ENCODE measurements at regions of chr1 and their contacts with region 1.

Region 1: DNA sequence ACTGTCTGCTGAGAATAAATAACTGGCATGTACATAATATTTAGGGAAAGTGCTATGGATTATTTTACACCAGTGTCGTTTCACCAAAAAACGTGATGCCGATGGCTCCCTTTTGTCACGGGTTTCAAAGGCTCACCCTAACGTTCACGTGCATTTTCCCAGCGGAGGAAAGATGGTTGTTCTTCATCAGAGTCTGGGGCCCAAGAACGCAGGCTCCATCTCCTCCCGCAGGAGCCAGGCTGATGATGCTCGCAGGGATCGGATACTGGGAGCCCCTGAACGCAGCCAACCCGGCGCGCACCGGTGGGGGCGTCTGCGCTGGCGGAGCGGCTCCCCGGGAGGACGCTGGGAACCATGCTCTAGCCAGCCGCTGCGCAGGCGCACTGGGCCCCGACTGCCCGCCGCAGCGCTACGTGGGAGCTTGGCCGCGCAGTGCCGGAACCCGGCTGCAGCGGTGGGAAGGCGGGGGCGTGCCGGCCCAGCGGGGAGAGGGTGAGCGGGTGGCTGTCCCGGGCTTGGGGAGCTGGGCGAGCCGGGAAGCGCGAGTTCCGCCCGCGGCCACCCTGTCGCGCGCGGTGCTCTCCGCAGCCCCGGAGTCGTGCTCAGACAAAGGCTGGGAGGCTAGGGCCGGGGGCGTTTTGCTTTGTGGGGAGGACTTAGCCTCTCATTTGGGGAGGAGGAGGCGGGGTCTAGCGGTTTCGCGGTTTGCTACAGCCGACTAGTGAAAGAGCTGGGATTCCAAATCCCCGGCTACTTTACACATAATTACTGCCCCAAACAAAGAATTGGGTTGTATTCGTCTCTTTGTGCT is at the start of gene ZFP69B:
- DNase-seq: peak; percentile 95
- H3K4me3 Mint-ChIP-seq: peak within 1 kb of the TSS; percentile 80
- H3K27ac Mint-ChIP-seq: peak within 1 kb of the TSS; percentile 93
- H3K4me1 Mint-ChIP-seq: peaks cover 32% of the 10 kb centered on the region
- H3K27me3 Mint-ChIP-seq: no peaks in the 10 kb centered on the region
- total RNA-seq, gene ZFP69B: 11.2 to 11.3 TPM

Region 2: DNA sequence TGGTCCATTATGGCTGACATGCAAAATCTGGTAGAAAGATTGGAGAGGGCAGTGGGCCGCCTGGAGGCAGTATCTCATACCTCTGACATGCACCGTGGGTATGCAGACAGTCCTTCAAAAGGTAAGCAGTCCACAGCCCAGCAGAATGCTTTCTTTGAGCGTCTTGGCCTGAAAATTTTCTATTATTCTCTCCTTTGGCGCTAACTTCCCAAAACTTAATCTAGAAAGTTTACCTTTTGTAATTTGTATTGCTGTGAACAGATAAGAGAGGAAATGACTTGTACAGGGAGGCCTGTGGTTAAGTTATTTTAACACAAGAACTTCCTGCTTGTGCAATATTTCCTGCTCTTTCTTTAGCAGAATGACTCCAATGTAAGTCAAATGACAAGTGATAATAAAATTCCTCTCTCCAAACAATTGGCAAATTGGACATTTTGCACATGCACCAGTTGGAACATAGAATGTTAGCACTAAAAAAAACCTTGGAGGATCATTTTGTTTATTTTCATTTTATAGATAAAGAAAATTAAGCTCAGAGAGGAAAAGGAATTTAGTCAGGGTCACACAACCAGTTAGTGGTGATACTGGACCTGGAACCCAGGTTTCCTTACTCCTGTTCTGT is 390.4 kb before region 1 on chr1:
- CTCF ChIA-PET with region 1: no interaction called
- intact Hi-C with region 1: loop called (anchors 1 kb)
- DNase-seq: no peak
- H3K4me3 Mint-ChIP-seq: peak overlapping the region; percentile 41
- H3K27ac Mint-ChIP-seq: peak overlapping the region; percentile 83
- H3K4me1 Mint-ChIP-seq: peaks cover 88% of the 10 kb centered on the region
- H3K27me3 Mint-ChIP-seq: no peaks in the 10 kb centered on the region

Region 3: DNA sequence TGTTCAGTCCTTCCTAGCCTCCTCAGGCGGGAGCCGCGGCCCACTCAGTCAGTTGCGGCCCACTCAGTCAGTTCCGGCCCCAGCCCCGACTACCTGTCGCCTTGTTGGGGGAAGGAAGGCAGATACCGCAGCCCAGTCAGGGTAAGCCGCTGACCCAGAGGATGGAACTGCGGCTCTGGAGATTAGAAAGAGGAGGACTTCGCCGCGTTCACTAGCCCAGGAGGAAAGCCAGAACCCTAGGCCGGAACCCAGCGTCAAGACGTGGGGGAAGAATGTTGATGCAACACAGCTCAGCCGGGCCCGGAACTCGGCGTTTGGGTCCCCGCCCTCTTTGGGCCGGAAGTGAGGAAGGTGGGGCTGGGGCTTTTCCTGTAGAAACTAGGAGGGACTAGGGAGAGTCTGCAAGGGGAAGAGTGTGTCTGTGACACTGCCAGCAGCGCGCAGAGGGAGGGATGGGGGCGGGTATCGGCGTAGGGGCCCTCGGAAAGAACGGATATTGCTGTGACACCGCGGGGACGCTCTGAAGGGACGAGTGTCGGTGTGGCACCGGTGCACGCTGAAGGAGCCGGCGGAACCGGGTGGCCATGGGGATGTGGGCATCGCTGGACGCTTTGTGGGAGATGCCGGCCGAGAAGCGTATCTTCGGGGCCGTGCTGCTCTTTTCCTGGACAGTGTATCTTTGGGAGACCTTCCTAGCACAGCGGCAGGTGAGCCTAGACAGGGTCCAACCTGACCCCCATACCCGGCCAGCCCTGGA is 192.0 kb before region 1 on chr1 and contains the start of gene ZMPSTE24:
- CTCF ChIA-PET with region 1: no interaction called
- intact Hi-C with region 1: loop called (anchors 1 kb)
- DNase-seq: peak; percentile 98
- H3K4me3 Mint-ChIP-seq: peak within 1 kb of the TSS; percentile 99
- H3K27ac Mint-ChIP-seq: peak within 1 kb of the TSS; percentile 100
- H3K4me1 Mint-ChIP-seq: peaks cover 35% of the 10 kb centered on the region
- H3K27me3 Mint-ChIP-seq: no peaks in the 10 kb centered on the region
- total RNA-seq, gene ZMPSTE24: 13.2 to 14.7 TPM

Region 4: GRCh38 chr1:40394491-40395172 is 55.3 kb before region 1 on chr1:
- CTCF ChIA-PET with region 1: no interaction called
- intact Hi-C with region 1: loop called (anchors 2 kb)
- DNase-seq: peak; percentile 79
- H3K4me3 Mint-ChIP-seq: peak overlapping the region; percentile 48
- H3K27ac Mint-ChIP-seq: peak overlapping the region; percentile 95
- H3K4me1 Mint-ChIP-seq: peaks cover 90% of the 10 kb centered on the region
- H3K27me3 Mint-ChIP-seq: no peaks in the 10 kb centered on the region

Region 5: GRCh38 chr1:40476924-40477677 is 27.2 kb after region 1 on chr1 and contains the start of gene ZFP69:
- CTCF ChIA-PET with region 1: interaction called, 3 read pairs
- intact Hi-C with region 1: loop called (anchors 1 kb)
- DNase-seq: peak; percentile 72
- H3K4me3 Mint-ChIP-seq: peak within 1 kb of the TSS; percentile 83
- H3K27ac Mint-ChIP-seq: peak within 1 kb of the TSS; percentile 60
- H3K4me1 Mint-ChIP-seq: peaks cover 20% of the 10 kb centered on the region
- H3K27me3 Mint-ChIP-seq: no peaks in the 10 kb centered on the region
- total RNA-seq, gene ZFP69: 3.5 to 3.8 TPM

Region 6: GRCh38 chr1:40531381-40532061 is 81.6 kb after region 1 on chr1 and contains the start of gene ZNF684:
- CTCF ChIA-PET with region 1: no interaction called
- intact Hi-C with region 1: loop called (anchors 1 kb)
- DNase-seq: peak; percentile 94
- H3K4me3 Mint-ChIP-seq: peak within 1 kb of the TSS; percentile 99
- H3K27ac Mint-ChIP-seq: peak within 1 kb of the TSS; percentile 91
- H3K4me1 Mint-ChIP-seq: peaks cover 18% of the 10 kb centered on the region
- H3K27me3 Mint-ChIP-seq: peaks cover 4% of the 10 kb centered on the region
- total RNA-seq, gene ZNF684: 6.8 to 7.0 TPM